ENCODE measurements at regions of chr5 and their contacts with region 1.

Region 1: GRCh38 chr5:126339215-126339805 is 83.9 kb upstream of the GRAMD2B start:
- DNase-seq: peak; percentile 57
- H3K4me3 ChIP-seq: no peak overlapping the region
- H3K27ac ChIP-seq: no peak overlapping the region
- H3K4me1 ChIP-seq: peaks cover 19% of the 10 kb centered on the region
- H3K27me3 ChIP-seq: no peaks in the 10 kb centered on the region
- CTCF ChIP-seq: peak; percentile 72 to 79

Region 2: DNA sequence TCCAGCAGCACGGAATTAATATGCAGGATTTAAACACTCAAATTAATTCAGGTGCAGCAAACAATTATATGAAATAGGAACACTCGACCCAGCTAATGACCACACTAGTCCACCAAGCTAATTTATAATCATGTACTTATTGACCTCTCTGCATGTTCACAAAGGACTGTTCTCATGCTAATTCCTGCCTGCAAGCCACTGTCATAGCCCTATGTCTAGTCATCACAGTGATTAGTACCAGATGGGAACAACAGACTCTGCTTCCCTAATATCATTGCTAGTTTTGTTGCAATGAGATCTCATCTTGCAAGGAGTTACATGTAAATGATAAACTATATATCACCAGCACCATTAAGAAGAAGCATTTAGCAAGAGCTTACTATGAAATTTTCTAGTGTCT is 469.1 kb before region 1 on chr5:
- CTCF ChIA-PET with region 1: no interaction called
- dilution Hi-C with region 1: no loop called
- in situ Hi-C with region 1: no loop called
- intact Hi-C with region 1: loop called (anchors 10 kb)
- DNase-seq: no peak
- H3K4me3 ChIP-seq: no peak overlapping the region
- H3K27ac ChIP-seq: no peak overlapping the region
- H3K4me1 ChIP-seq: peaks cover 38% of the 10 kb centered on the region
- H3K27me3 ChIP-seq: no peaks in the 10 kb centered on the region
- CTCF ChIP-seq: no peak

Region 3: DNA sequence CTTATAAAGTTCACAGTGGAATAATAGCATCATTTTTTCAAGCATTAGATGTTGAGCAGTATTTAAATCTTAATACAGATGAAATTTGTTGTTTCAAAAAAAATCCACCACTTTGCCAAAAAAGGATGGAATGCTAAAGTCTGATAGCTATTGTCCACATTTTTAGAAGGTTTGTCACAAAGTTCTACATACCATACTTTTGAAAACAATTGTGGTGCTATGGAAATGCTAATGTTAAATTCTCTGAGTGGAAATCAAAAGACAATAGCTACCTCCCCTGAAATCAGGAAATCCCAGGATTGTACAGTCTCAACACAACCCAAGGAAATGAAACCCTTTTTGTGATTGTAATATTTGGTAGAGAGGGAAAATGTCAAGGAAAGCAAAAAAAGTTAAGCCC is 64.6 kb after region 1 on chr5:
- CTCF ChIA-PET with region 1: no interaction called
- dilution Hi-C with region 1: no loop called
- in situ Hi-C with region 1: no loop called
- intact Hi-C with region 1: no loop called
- DNase-seq: no peak
- H3K4me3 ChIP-seq: no peak overlapping the region
- H3K27ac ChIP-seq: no peak overlapping the region
- H3K4me1 ChIP-seq: no peaks in the 10 kb centered on the region
- H3K27me3 ChIP-seq: no peaks in the 10 kb centered on the region
- CTCF ChIP-seq: no peak

Region 4: GRCh38 chr5:126544087-126544740 is 204.9 kb after region 1 on chr5:
- CTCF ChIA-PET with region 1: interaction called, 3 read pairs
- dilution Hi-C with region 1: no loop called
- in situ Hi-C with region 1: loop called in 1 of 2 experiments (anchors 5 kb)
- intact Hi-C with region 1: loop called (anchors 1 kb)
- DNase-seq: peak; percentile 25
- H3K4me3 ChIP-seq: no peak overlapping the region
- H3K27ac ChIP-seq: no peak overlapping the region
- H3K4me1 ChIP-seq: no peaks in the 10 kb centered on the region
- H3K27me3 ChIP-seq: no peaks in the 10 kb centered on the region
- CTCF ChIP-seq: peak; percentile 42 to 64

Region 5: GRCh38 chr5:126656396-126657007 is 317.2 kb after region 1 on chr5:
- CTCF ChIA-PET with region 1: no interaction called
- dilution Hi-C with region 1: no loop called
- in situ Hi-C with region 1: no loop called
- intact Hi-C with region 1: loop called (anchors 5 kb)
- DNase-seq: no peak
- H3K4me3 ChIP-seq: no peak overlapping the region
- H3K27ac ChIP-seq: no peak overlapping the region
- H3K4me1 ChIP-seq: no peaks in the 10 kb centered on the region
- H3K27me3 ChIP-seq: no peaks in the 10 kb centered on the region
- CTCF ChIP-seq: peak; percentile 87 to 88

Region 6: GRCh38 chr5:126801992-126802294 is 462.6 kb after region 1 on chr5:
- CTCF ChIA-PET with region 1: no interaction called
- dilution Hi-C with region 1: no loop called
- in situ Hi-C with region 1: loop called (anchors 25 kb)
- intact Hi-C with region 1: loop called (anchors 5 kb)
- DNase-seq: peak; percentile 22
- H3K4me3 ChIP-seq: no peak overlapping the region
- H3K27ac ChIP-seq: no peak overlapping the region
- H3K4me1 ChIP-seq: peaks cover 5% of the 10 kb centered on the region
- H3K27me3 ChIP-seq: no peaks in the 10 kb centered on the region
- CTCF ChIP-seq: peak; percentile 20 to 47